ENCODE measurements at regions of chr20 and their contacts with region 1.

Region 1: GRCh38 chr20:19571996-19572395 is 186.1 kb upstream of the RIN2 start:
- DNase-seq: no peak
- H3K4me3 ChIP-seq: no peak overlapping the region
- H3K4me3 Mint-ChIP-seq: no peak overlapping the region
- H3K27ac Mint-ChIP-seq: no peak overlapping the region
- H3K4me1 ChIP-seq: no peaks in the 10 kb centered on the region
- H3K4me1 Mint-ChIP-seq: no peaks in the 10 kb centered on the region
- H3K27me3 ChIP-seq: no peaks in the 10 kb centered on the region; the same call in 1 of the 2 replicates
- H3K27me3 Mint-ChIP-seq: peaks cover 10% of the 10 kb centered on the region
- CTCF ChIP-seq: no peak

Region 2: GRCh38 chr20:19351539-19351938 is 220.5 kb before region 1 on chr20:
- CTCF ChIA-PET with region 1: no interaction called
- POLR2A ChIA-PET with region 1: no interaction called
- intact Hi-C with region 1: no loop called
- DNase-seq: no peak
- H3K4me3 ChIP-seq: no peak overlapping the region
- H3K4me3 Mint-ChIP-seq: no peak overlapping the region
- H3K27ac Mint-ChIP-seq: no peak overlapping the region
- H3K4me1 ChIP-seq: no peaks in the 10 kb centered on the region
- H3K4me1 Mint-ChIP-seq: no peaks in the 10 kb centered on the region
- H3K27me3 ChIP-seq: no peaks in the 10 kb centered on the region
- H3K27me3 Mint-ChIP-seq: no peaks in the 10 kb centered on the region
- CTCF ChIP-seq: no peak

Region 3: DNA sequence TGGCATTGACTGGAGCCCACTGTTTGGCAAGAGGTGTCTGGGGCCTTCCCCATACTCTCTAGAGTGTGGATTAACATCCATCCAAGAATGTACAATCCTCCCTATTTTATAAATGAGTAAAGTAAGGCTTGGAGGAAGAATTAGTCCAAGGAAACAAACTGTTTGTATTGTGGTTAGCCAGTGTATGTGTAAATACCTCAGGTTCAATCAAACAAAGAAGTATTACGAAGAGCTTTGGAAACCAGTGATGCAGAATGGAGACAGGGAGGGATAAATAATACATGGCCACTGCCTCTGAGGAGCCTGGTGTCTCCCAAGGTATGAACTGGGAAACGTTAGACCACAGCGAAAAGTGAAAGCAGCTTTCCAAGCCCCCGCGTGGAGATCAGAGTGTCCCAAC is 40.5 kb before region 1 on chr20:
- CTCF ChIA-PET with region 1: no interaction called
- POLR2A ChIA-PET with region 1: no interaction called
- intact Hi-C with region 1: no loop called
- DNase-seq: no peak
- H3K4me3 ChIP-seq: no peak overlapping the region
- H3K4me3 Mint-ChIP-seq: no peak overlapping the region
- H3K27ac Mint-ChIP-seq: no peak overlapping the region
- H3K4me1 ChIP-seq: no peaks in the 10 kb centered on the region
- H3K4me1 Mint-ChIP-seq: no peaks in the 10 kb centered on the region
- H3K27me3 ChIP-seq: no peaks in the 10 kb centered on the region
- H3K27me3 Mint-ChIP-seq: peaks cover 10% of the 10 kb centered on the region
- CTCF ChIP-seq: no peak

Region 4: GRCh38 chr20:19552134-19552835 is 19.7 kb before region 1 on chr20:
- CTCF ChIA-PET with region 1: no interaction called
- POLR2A ChIA-PET with region 1: no interaction called
- intact Hi-C with region 1: loop called (anchors 1 kb)
- DNase-seq: peak; percentile 38 to 48
- H3K4me3 ChIP-seq: no peak overlapping the region
- H3K4me3 Mint-ChIP-seq: no peak overlapping the region
- H3K27ac Mint-ChIP-seq: no peak overlapping the region
- H3K4me1 ChIP-seq: no peaks in the 10 kb centered on the region
- H3K4me1 Mint-ChIP-seq: no peaks in the 10 kb centered on the region
- H3K27me3 ChIP-seq: no peaks in the 10 kb centered on the region; the same call in 1 of the 2 replicates
- H3K27me3 Mint-ChIP-seq: peaks cover 6% of the 10 kb centered on the region
- CTCF ChIP-seq: no peak

Region 5: DNA sequence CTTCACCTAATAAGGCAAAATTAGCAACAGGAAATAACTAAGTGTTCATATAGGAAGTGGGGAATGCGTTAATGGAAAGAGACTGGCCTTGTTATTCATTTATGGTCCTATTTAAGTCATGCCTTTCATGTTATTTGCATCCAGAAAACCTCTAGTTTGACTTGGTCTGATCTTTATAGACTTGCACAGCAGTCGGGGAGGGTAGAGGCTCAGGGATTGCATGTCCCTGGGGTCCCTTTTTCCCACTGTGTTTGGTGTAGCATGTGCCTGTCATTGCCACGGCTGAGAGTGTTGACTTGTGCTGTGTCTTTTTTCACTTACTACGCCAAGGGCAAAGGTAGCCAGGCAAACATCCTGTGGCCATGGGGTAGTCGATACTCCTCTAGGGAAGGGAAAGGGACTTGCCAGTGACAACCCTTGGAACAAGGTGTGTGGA is 80.6 kb after region 1 on chr20:
- CTCF ChIA-PET with region 1: no interaction called
- POLR2A ChIA-PET with region 1: no interaction called
- intact Hi-C with region 1: no loop called
- DNase-seq: no peak
- H3K4me3 ChIP-seq: no peak overlapping the region
- H3K4me3 Mint-ChIP-seq: no peak overlapping the region
- H3K27ac Mint-ChIP-seq: no peak overlapping the region
- H3K4me1 ChIP-seq: no peaks in the 10 kb centered on the region
- H3K4me1 Mint-ChIP-seq: no peaks in the 10 kb centered on the region
- H3K27me3 ChIP-seq: no peaks in the 10 kb centered on the region; the same call in 1 of the 2 replicates
- H3K27me3 Mint-ChIP-seq: peaks cover under 1% of the 10 kb centered on the region
- CTCF ChIP-seq: no peak

Measured in Caco-2 (cell line).